ENCODE measurements at regions of chr12 and their contacts with region 1.

Region 1: GRCh38 chr12:9049520-9050133 is 60.3 kb downstream of the KLRG1 start:
- DNase-seq: peak in 4 of 9 experiments; percentile 30 to 76 (median 56)
- ATAC-seq: peak; percentile 83
- H3K4me3 ChIP-seq: no peak overlapping the region
- H3K4me3 Mint-ChIP-seq: no peak overlapping the region
- H3K27ac ChIP-seq: no peak overlapping the region
- H3K27ac Mint-ChIP-seq: no peak overlapping the region
- H3K4me1 ChIP-seq: peaks cover 5% of the 10 kb centered on the region
- H3K4me1 Mint-ChIP-seq: peaks cover 29% of the 10 kb centered on the region
- H3K27me3 ChIP-seq: no peaks in the 10 kb centered on the region
- H3K27me3 Mint-ChIP-seq: no peaks in the 10 kb centered on the region
- CTCF ChIP-seq: peak; percentile 85

Region 2: GRCh38 chr12:8681041-8681902 is 368.4 kb before region 1 on chr12:
- CTCF ChIA-PET with region 1: interaction called, 54 read pairs
- POLR2A ChIA-PET with region 1: no interaction called
- intact Hi-C with region 1: loop called (anchors 1 kb)
- DNase-seq: no peak
- ATAC-seq: no peak
- H3K4me3 ChIP-seq: no peak overlapping the region
- H3K4me3 Mint-ChIP-seq: no peak overlapping the region
- H3K27ac ChIP-seq: no peak overlapping the region
- H3K27ac Mint-ChIP-seq: no peak overlapping the region
- H3K4me1 ChIP-seq: no peaks in the 10 kb centered on the region
- H3K4me1 Mint-ChIP-seq: peaks cover 10% of the 10 kb centered on the region
- H3K27me3 ChIP-seq: no peaks in the 10 kb centered on the region
- H3K27me3 Mint-ChIP-seq: peaks cover 2% of the 10 kb centered on the region
- CTCF ChIP-seq: no peak

Region 3: DNA sequence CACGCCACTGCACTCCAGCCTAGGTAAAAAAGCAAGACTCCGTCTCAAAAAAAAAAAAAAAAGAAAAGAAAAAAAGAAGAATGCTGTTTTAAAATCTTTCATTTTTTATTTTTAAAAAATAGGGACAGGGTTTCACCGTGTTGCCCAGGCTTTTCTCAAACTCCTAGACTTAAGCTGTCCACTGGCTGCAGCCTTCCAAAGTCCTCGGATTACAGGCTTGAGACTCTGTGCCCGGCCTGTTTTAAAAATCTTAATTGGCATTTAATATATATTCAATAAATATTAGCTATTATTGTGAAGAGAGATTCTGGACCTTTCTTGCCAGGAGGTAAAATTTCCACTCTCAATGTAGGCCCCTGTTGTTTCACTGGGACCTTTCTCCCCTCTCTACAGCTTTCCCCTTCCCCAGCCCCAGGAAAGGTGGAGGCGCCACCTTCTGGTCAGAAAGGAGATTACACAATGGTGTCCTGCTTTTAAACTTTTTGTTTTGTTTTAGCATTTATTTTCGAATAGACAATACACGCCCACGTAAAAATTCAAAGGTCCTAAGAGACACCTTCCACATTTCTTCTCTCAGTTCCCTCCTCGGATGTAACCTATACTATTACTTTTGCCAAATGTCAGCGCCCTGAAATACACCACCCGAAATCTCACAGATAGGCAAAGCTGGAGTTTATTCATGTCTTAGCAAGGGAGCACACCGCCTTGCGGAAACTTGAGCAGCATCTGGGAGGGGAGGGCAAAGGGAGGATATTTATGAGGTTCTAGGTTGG is 159.1 kb before region 1 on chr12:
- CTCF ChIA-PET with region 1: interaction called, 22 read pairs
- POLR2A ChIA-PET with region 1: interaction called, 3 read pairs
- intact Hi-C with region 1: loop called in 1 of 2 experiments (anchors 1 kb)
- DNase-seq: peak; percentile 30 to 77 (median 55)
- ATAC-seq: peak; percentile 90
- H3K4me3 ChIP-seq: peak overlapping the region; percentile 44 to 55
- H3K4me3 Mint-ChIP-seq: peak overlapping the region; percentile 88
- H3K27ac ChIP-seq: peak overlapping the region in 1 of 2 experiments; percentile 26
- H3K27ac Mint-ChIP-seq: peak overlapping the region; percentile 66
- H3K4me1 ChIP-seq: no peaks in the 10 kb centered on the region
- H3K4me1 Mint-ChIP-seq: peaks cover 4% of the 10 kb centered on the region
- H3K27me3 ChIP-seq: no peaks in the 10 kb centered on the region
- H3K27me3 Mint-ChIP-seq: peaks cover 2% of the 10 kb centered on the region
- CTCF ChIP-seq: peak; percentile 94

Region 4: GRCh38 chr12:8914716-8915526 is 134.7 kb before region 1 on chr12:
- CTCF ChIA-PET with region 1: interaction called, 22 read pairs
- POLR2A ChIA-PET with region 1: no interaction called
- intact Hi-C with region 1: loop called in 1 of 2 experiments (anchors 1 kb)
- DNase-seq: peak; percentile 26 to 81 (median 60)
- ATAC-seq: peak; percentile 81
- H3K4me3 ChIP-seq: peak overlapping the region; percentile 79 to 82
- H3K4me3 Mint-ChIP-seq: no peak overlapping the region
- H3K27ac ChIP-seq: peak overlapping the region; percentile 44 to 61
- H3K27ac Mint-ChIP-seq: no peak overlapping the region
- H3K4me1 ChIP-seq: peaks cover 23% of the 10 kb centered on the region
- H3K4me1 Mint-ChIP-seq: peaks cover 13% of the 10 kb centered on the region
- H3K27me3 ChIP-seq: no peaks in the 10 kb centered on the region
- H3K27me3 Mint-ChIP-seq: no peaks in the 10 kb centered on the region
- CTCF ChIP-seq: no peak

Region 5: DNA sequence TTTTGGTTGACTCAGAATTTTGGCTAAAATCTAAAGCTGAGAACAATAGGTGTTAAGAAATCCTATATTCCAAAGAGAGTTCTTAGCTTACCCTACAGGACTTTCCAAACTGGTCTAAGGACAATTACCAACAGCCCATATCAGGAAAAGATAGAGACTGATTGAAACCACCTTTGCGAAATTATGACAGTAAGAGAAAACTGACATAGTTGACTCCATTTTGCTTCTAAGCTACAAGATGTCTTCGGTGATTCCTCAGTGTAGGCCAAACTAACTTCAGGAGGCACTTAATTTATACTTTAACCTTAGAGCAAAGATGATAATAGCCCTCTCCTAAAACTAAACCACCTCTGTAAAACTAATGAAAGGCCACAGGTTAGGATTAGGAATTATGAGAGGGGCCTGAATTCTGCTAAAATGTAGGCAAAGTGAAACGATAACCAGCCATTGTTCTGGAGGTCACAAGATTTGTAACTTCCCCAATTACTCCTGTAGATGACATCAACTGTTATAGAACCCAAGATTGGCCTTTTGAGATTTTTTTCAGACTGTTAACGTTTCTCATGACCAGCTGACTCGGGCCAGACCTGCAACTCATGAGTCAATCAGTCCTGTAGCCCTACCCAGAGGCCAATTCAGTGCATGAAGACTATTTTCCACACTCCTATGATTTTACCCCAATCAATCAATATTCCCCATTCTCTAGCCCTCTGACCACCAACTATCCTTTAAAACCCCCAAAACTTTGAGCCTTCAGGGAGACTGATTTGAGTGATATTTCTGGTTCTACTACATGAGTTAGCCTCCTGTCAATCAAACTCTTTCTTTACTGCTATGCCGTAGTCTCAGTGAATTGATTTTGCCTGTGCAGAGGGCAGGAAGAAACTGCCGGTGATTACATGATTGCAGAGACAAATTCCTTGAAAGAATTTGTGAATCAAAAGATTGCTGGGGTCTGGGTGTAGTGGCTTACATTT is 17.1 kb before region 1 on chr12:
- CTCF ChIA-PET with region 1: interaction called, 26 read pairs
- POLR2A ChIA-PET with region 1: interaction called, 3 read pairs
- intact Hi-C with region 1: no loop called
- DNase-seq: no peak
- ATAC-seq: no peak
- H3K4me3 ChIP-seq: no peak overlapping the region
- H3K4me3 Mint-ChIP-seq: no peak overlapping the region
- H3K27ac ChIP-seq: peak overlapping the region in 1 of 2 experiments; percentile 2
- H3K27ac Mint-ChIP-seq: peak overlapping the region; percentile 38
- H3K4me1 ChIP-seq: peaks cover 49% of the 10 kb centered on the region
- H3K4me1 Mint-ChIP-seq: peaks cover 66% of the 10 kb centered on the region
- H3K27me3 ChIP-seq: no peaks in the 10 kb centered on the region
- H3K27me3 Mint-ChIP-seq: no peaks in the 10 kb centered on the region
- CTCF ChIP-seq: no peak